Calu3 (cell line): ENCODE measurements at regions of chr17 and their contacts with region 1.

Region 1: GRCh38 chr17:76353599-76354316 is at the start of gene PRPSAP1:
- DNase-seq: peak; percentile 87
- H3K4me3 Mint-ChIP-seq: peak within 1 kb of the TSS; percentile 96
- H3K27ac Mint-ChIP-seq: peak within 1 kb of the TSS; percentile 98
- H3K4me1 Mint-ChIP-seq: peaks cover 30% of the 10 kb centered on the region
- H3K27me3 Mint-ChIP-seq: no peaks in the 10 kb centered on the region
- CTCF ChIP-seq: peak; percentile 49
- total RNA-seq, gene PRPSAP1: 41.2 and 42.6 TPM in 2 replicates

Region 2: DNA sequence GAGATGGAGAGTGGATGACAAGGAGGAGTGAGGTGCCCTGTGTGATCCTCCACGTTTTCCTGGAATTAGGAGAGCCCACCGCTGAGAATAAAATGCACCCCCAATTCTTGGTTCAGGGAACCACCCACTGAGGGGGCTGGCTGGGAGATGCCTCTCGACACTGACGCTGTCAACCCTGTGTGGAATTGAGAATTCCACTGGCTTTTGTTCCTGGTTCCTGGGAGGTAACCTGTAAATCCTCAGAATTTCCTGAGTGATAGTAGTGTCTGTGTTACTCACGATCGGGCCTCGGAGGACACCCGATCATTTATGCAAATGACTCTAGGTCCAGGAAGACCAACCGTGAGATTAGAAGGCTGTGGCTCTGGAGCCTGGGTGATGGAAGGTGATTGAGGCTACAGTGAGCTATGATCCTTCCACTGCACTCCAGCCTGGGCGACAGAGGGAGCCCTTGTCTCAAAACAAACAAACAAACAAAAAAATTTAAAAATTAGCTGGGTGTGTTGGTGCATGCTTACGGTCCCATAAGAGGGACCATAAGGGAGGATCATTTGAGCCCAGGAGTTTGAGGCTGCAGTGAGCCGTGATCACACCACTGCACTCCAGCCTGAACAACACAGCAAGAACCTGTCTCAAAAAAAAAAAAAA is 11.6 kb after region 1 on chr17:
- CTCF ChIA-PET with region 1: interaction called, 12 read pairs
- intact Hi-C with region 1: no loop called
- DNase-seq: no peak
- H3K4me3 Mint-ChIP-seq: no peak overlapping the region
- H3K27ac Mint-ChIP-seq: no peak overlapping the region
- H3K4me1 Mint-ChIP-seq: peaks cover 6% of the 10 kb centered on the region
- H3K27me3 Mint-ChIP-seq: peaks cover 8% of the 10 kb centered on the region
- CTCF ChIP-seq: peak; percentile 29

Region 3: GRCh38 chr17:76391200-76391715 is 37.5 kb after region 1 on chr17:
- CTCF ChIA-PET with region 1: no interaction called
- intact Hi-C with region 1: no loop called
- DNase-seq: no peak
- H3K4me3 Mint-ChIP-seq: no peak overlapping the region
- H3K27ac Mint-ChIP-seq: no peak overlapping the region
- H3K4me1 Mint-ChIP-seq: no peaks in the 10 kb centered on the region
- H3K27me3 Mint-ChIP-seq: no peaks in the 10 kb centered on the region
- CTCF ChIP-seq: no peak